ENCODE measurements at regions of chr7 and their contacts with region 1.

Region 1: DNA sequence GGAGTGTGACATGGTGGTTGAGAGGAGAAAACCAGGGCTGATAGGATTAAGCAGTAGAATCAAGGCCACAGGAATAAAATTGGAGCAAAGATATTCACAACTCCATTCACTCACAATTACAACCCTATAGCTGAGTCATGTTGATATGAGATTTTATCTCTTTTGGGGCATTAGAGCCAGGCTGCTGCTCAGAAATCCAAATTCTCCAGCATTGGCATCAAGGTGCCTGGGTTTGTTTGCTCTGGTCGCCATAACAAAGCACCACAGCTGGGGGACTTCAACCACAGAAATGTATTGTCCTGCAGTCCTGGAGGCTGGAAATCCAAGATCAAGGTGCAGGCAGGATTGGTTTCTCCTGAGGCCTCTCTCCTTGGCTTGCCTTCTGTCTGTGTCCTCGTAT is 52.5 kb upstream of the GRB10 start:
- DNase-seq: no peak

Region 2: GRCh38 chr7:50860174-50860573 is 25.0 kb after region 1 on chr7:
- intact Hi-C with region 1: loop called in 1 of 2 experiments (anchors 1 kb)
- DNase-seq: no peak